ENCODE measurements at regions of chr4 and their contacts with region 1.

Region 1: DNA sequence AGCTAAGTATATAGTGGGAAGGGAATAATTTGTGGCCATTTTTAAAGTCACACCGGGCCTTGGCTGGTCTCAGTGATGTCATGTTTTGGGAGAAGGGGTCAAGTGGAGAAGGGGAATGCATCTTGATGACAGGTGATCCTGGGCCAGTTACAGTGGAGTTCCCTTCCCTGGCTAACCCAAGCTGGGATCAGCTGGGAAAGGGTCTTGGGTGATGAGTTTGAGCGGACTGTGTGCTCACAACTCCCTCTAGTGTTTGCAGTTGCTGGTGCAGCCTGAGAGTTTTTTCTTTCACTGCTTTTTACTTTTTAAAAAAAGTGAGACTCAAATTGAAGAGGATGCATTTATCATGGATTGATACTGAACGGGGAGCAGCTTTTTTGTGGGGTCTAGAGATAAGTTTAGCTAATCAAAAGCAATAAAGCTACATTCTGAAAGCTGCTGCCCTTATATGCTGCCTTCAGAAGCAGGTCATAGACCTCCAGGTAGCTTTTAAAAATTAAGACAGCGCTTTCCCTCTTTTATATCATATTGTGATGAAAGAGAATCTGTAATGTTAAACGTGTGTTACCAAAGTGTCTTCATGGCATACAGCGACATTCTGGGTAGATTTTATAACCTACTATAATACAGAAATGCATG is 164.7 kb downstream of the DCLK2 start:
- DNase-seq: peak; percentile 65

Region 2: DNA sequence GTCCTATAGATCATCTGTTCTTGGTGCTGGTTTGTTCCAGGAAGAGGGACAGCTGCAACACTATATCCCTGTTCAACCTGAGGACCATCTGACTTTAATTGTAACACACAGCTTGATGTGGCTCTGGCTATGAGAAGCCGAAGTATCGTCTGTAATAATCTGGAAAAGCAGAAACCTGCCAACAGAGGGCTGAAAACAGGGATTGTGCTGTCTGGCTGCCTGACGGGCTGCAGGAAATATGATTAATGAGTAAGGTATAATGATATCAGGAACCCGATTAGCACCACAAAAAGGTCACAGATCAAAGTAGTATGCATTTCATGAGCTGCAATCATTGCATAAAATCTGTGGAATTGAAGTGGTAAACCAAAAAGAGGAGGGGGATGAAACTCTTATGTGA is 168.6 kb after region 1 on chr4:
- CTCF ChIA-PET with region 1: no interaction called
- POLR2A ChIA-PET with region 1: no interaction called
- DNase-seq: no peak

Region 3: DNA sequence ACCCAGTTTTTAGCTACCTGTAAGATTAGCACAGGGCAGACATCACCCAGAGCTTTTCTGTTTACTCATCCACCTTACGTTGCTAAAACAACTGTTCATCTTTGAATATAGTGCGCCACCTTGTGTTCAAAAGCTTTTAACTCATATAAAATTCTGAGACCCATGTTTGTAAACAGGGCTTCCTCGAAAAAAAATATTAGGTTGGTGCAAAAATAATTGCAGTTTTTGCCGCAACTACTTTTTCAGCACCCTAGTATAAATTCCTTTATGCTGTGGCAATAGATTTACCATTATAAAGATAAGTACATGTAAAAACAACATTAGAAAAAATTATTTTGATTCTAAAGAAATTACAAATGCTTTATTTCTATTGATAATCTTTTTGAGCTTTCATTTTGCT is 624.2 kb after region 1 on chr4:
- CTCF ChIA-PET with region 1: interaction called, 11 read pairs
- POLR2A ChIA-PET with region 1: no interaction called
- DNase-seq: peak; percentile 50

Measured in HEK293T (cell line).